Gastrocnemius medialis (tissue), 4 donors: ENCODE measurements at regions of chr9 and their contacts with region 1.

Region 1: DNA sequence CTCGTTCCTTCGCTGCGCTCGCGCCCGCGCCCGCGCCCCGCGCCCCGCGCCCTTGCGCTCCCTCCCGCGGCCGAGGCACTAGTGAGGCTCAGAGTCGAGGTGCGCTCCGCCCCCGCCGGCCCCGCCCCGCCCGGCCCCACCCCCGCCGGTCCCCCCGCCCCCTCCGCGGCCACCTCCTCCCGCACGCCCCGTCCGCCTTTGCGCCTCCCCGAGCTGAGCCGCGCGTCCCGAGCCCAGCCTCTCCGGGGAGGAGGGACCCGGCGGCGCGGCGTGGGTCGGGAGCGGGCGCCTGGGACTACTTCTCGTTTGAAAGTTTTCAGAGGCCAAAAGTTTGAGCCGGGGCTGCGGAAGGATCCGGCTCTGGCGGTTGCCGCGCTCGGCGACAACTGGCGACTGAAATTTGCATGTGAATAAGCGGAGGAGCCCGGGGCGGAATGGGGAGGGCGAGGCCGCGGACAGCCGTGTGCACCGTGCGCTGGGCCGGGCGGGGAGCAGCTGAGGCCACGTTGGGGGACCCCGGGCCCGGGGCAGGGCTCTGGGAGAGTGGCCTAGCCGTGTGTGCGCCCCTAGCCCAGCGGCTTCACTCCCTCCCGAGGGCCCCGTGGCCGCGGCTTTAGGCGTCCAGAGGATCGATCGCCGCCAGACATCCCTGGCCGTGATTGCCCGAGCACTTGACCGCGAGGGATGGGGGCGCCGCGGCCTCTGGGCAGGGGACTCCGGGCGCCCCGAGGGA is at the start of gene NOTCH1:
- DNase-seq: peak; percentile 78 to 83
- ATAC-seq: peak; percentile 73 to 77
- H3K4me3 ChIP-seq: peak within 1 kb of the TSS; percentile 67 to 88 (median 76)
- H3K27ac ChIP-seq: peak within 1 kb of the TSS; percentile 91 to 96 (median 94)
- H3K4me1 ChIP-seq: peaks cover 17 to 20% of the 10 kb centered on the region in 2 donors
- H3K27me3 ChIP-seq: no peaks in the 10 kb centered on the region
- CTCF ChIP-seq: peak in 1 of 5 experiments; percentile 10
- POLR2A ChIP-seq: peak; percentile 81 to 86
- total RNA-seq, gene NOTCH1: 6.3 to 15.4 (median 8.2) TPM

Region 2: GRCh38 chr9:136527721-136528691 is 18.1 kb before region 1 on chr9:
- in situ Hi-C with region 1: no loop called
- intact Hi-C with region 1: loop called (anchors 1 kb)
- DNase-seq: no peak
- ATAC-seq: no peak
- H3K4me3 ChIP-seq: no peak overlapping the region
- H3K27ac ChIP-seq: peak overlapping the region; percentile 51 to 75 (median 58)
- H3K4me1 ChIP-seq: peaks cover 48 to 68% of the 10 kb centered on the region in 2 donors
- H3K27me3 ChIP-seq: no peaks in the 10 kb centered on the region
- CTCF ChIP-seq: no peak
- POLR2A ChIP-seq: no peak